ENCODE measurements at regions of chr19 and their contacts with region 1.

Region 1: DNA sequence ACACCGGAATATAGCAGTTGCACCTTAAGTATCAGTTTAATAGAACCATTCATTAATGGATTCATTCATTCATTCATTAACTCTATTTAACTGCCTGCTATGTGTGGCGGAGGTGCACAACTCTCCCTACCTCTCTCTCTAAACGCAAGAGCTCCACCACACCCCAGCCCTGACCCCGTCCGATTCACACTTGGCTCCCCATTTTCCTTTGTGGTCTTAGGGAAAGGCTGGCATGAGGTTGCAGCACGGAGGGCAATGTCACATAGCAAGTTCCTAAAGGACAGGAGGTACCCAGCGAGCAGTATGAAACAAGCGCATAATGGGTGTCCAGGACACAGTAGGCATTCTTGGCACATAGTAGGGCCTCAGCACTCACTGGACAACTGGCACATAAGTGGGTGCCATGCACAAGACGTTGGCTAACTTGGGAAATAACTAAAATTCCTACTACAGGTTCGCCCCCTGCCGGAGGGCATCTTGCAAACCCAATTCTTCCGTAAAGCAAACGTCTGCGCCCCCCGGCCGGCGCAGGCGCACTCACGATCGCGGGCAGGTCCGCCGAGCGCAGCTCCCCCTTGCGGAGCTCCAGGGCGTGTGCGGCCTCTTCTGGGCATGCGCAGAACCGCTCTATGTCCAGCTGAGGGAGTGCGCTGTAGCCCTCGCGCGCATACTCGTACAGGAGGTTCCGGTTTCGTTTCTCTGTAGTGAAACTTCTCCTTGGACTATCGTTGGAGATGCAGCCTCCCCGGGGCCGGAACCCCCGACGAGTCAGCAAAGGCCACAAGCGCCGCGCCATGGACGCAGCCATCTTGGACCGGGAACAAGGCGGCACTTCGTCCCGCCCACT is at the start of gene SARS2:
- DNase-seq: peak; percentile 92 to 99 (median 97)
- H3K4me3 ChIP-seq: peak within 1 kb of the TSS; percentile 85 to 87
- H3K4me3 Mint-ChIP-seq: peak within 1 kb of the TSS; percentile 94 to 99 (median 98)
- H3K27ac ChIP-seq: peak within 1 kb of the TSS; percentile 93
- H3K27ac Mint-ChIP-seq: peak within 1 kb of the TSS; percentile 98 to 100 (median 100)
- H3K4me1 ChIP-seq: peaks cover 40% of the 10 kb centered on the region
- H3K4me1 Mint-ChIP-seq: peaks cover 13 to 57% (median 32%) of the 10 kb centered on the region in 4 donors
- H3K27me3 ChIP-seq: no peaks in the 10 kb centered on the region
- H3K27me3 Mint-ChIP-seq: no peaks in the 10 kb centered on the region
- total RNA-seq, gene SARS2: 17.0 to 20.2 TPM

Region 2: GRCh38 chr19:37906869-37907734 is 1023.0 kb before region 1 on chr19 and contains the start of gene SIPA1L3:
- CTCF ChIA-PET with region 1: no interaction called
- POLR2A ChIA-PET with region 1: no interaction called
- intact Hi-C with region 1: loop called (anchors 5 kb)
- DNase-seq: peak; percentile 89 to 92 (median 90)
- H3K4me3 ChIP-seq: peak within 1 kb of the TSS; percentile 63 to 96
- H3K4me3 Mint-ChIP-seq: peak within 1 kb of the TSS; percentile 92 to 96 (median 93)
- H3K27ac ChIP-seq: peak within 1 kb of the TSS; percentile 71
- H3K27ac Mint-ChIP-seq: peak within 1 kb of the TSS; percentile 86 to 95 (median 91)
- H3K4me1 ChIP-seq: peaks cover 22% of the 10 kb centered on the region
- H3K4me1 Mint-ChIP-seq: peaks cover 16 to 36% (median 25%) of the 10 kb centered on the region in 4 donors
- H3K27me3 ChIP-seq: no peaks in the 10 kb centered on the region
- H3K27me3 Mint-ChIP-seq: no peaks in the 10 kb centered on the region
- total RNA-seq, gene SIPA1L3: 31.8 to 35.0 TPM

Region 3: DNA sequence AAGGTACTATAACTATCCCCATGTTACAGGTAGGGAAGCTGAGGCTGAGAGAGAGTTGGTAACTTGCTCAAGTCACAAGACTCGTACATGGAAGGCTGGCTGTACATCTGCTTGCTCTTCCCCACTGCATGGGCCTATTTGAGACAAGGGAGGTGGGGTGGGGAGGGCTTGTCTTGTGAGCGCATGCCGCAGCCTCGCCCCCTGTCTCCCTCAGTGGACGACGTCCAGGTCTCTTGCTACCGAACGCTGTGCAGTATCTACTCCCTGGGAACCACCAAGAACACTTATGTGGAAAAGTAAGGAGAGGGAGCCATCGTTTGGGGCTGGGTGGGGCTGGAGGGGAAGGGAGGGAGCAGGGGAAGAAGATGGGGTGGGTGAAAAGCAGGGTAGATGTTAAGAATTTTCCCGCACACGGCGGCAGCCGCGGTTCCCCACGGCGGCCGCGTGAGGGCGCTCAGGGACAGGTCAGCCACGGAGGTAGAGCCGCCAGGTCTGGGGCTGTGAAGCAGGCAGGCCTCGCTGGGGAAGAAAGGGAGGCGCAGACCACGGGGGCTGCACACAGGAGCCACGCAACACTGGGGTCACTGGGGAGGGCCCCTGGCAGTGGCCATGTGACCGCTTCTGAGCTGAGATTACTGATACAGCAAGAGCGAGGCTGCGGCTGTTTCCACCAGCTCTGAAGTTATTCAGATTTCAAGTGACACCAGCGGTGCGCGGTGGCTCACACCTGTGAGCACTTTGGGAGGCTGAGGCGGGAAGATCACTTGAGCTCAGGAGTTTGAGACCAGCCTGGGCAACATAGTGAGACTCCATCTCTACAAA is 415.1 kb before region 1 on chr19:
- CTCF ChIA-PET with region 1: interaction called, 11 read pairs
- POLR2A ChIA-PET with region 1: interaction called, 6 read pairs
- intact Hi-C with region 1: loop called (anchors 1 kb)
- DNase-seq: peak; percentile 74 to 79 (median 77)
- H3K4me3 ChIP-seq: no peak overlapping the region
- H3K4me3 Mint-ChIP-seq: peak overlapping the region in 3 of 8 donors; percentile 20 to 45 (median 22)
- H3K27ac ChIP-seq: no peak overlapping the region
- H3K27ac Mint-ChIP-seq: peak overlapping the region in 5 of 7 donors; percentile 35 to 57 (median 43)
- H3K4me1 ChIP-seq: peaks cover 19% of the 10 kb centered on the region
- H3K4me1 Mint-ChIP-seq: peaks cover 9 to 22% (median 16%) of the 10 kb centered on the region in 4 donors
- H3K27me3 ChIP-seq: no peaks in the 10 kb centered on the region
- H3K27me3 Mint-ChIP-seq: peaks cover 0 to 2% of the 10 kb centered on the region in 2 donors

Region 4: DNA sequence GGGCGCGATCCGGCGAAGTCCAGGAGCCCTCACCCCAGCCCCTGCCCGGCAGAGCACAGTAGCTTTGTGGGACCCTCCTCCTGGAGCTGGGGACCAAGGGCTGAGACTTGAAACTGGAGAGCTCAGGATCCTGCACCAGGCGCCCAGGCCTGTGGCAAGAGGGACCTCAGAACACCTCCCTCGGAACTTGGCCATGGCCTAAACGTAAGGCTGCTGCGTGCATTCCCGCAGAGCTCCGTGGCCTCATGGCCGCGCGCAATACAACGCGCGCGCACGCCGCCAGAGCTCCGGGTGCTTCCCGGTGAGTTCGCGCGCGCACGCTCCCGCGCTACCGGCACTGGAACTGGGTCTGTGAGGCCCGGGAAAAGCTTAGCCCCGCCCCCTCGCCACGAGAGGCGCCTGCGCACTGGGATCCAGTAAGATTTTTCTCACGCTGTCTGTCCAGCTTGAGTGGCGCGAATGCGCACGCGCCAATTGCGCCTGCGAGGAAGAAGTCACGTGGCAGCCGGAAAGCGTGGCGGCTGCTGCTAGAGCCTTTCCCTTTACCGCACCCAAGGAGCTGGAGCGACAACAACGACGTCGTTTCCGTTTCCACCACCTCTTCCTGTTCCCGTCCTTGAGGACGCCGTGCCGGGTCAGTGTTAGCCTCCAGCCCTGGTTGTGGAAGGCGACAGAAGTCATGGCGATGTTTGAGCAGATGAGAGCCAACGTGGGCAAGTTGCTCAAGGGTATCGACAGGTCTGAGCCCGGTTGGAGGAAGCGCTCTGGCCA is 311.4 kb before region 1 on chr19 and contains the start of gene EIF3K:
- CTCF ChIA-PET with region 1: interaction called, 14 read pairs
- POLR2A ChIA-PET with region 1: interaction called, 11 read pairs
- intact Hi-C with region 1: no loop called
- DNase-seq: peak; percentile 95 to 97 (median 96)
- H3K4me3 ChIP-seq: peak within 1 kb of the TSS; percentile 97 to 99
- H3K4me3 Mint-ChIP-seq: peak within 1 kb of the TSS; percentile 95 to 100 (median 100)
- H3K27ac ChIP-seq: peak within 1 kb of the TSS; percentile 90
- H3K27ac Mint-ChIP-seq: peak within 1 kb of the TSS; percentile 93 to 100 (median 99)
- H3K4me1 ChIP-seq: peaks cover 57% of the 10 kb centered on the region
- H3K4me1 Mint-ChIP-seq: peaks cover 28 to 60% (median 45%) of the 10 kb centered on the region in 4 donors
- H3K27me3 ChIP-seq: no peaks in the 10 kb centered on the region
- H3K27me3 Mint-ChIP-seq: no peaks in the 10 kb centered on the region
- total RNA-seq, gene EIF3K: 320 to 340 TPM

Region 5: GRCh38 chr19:38736036-38736412 is 194.1 kb before region 1 on chr19:
- CTCF ChIA-PET with region 1: interaction called, 18 read pairs
- POLR2A ChIA-PET with region 1: interaction called, 15 read pairs
- intact Hi-C with region 1: loop called (anchors 1 kb)
- DNase-seq: peak; percentile 57 to 80 (median 59)
- H3K4me3 ChIP-seq: peak overlapping the region in 1 of 2 donors; percentile 14
- H3K4me3 Mint-ChIP-seq: peak overlapping the region; percentile 27 to 77 (median 60)
- H3K27ac ChIP-seq: peak overlapping the region; percentile 30
- H3K27ac Mint-ChIP-seq: peak overlapping the region in 4 of 7 donors; percentile 30 to 88 (median 74)
- H3K4me1 ChIP-seq: peaks cover 57% of the 10 kb centered on the region
- H3K4me1 Mint-ChIP-seq: peaks cover 24 to 69% (median 42%) of the 10 kb centered on the region in 4 donors
- H3K27me3 ChIP-seq: no peaks in the 10 kb centered on the region
- H3K27me3 Mint-ChIP-seq: peaks cover 0 to 2% of the 10 kb centered on the region in 2 donors

Region 6: GRCh38 chr19:38849860-38850435 is 80.2 kb before region 1 on chr19 and contains the start of gene HNRNPL:
- CTCF ChIA-PET with region 1: interaction called, 8 read pairs
- POLR2A ChIA-PET with region 1: interaction called, 14 read pairs
- intact Hi-C with region 1: loop called (anchors 1 kb)
- DNase-seq: peak; percentile 99 to 100 (median 100)
- H3K4me3 ChIP-seq: peak within 1 kb of the TSS; percentile 94 to 98
- H3K4me3 Mint-ChIP-seq: peak within 1 kb of the TSS; percentile 94 to 97 (median 96)
- H3K27ac ChIP-seq: peak within 1 kb of the TSS; percentile 99
- H3K27ac Mint-ChIP-seq: peak within 1 kb of the TSS; percentile 83 to 100 (median 99)
- H3K4me1 ChIP-seq: peaks cover 58% of the 10 kb centered on the region
- H3K4me1 Mint-ChIP-seq: peaks cover 30 to 72% (median 50%) of the 10 kb centered on the region in 4 donors
- H3K27me3 ChIP-seq: no peaks in the 10 kb centered on the region
- H3K27me3 Mint-ChIP-seq: peaks cover 1% of the 10 kb centered on the region in 2 donors
- total RNA-seq, gene HNRNPL: 329 to 351 TPM

Region 7: DNA sequence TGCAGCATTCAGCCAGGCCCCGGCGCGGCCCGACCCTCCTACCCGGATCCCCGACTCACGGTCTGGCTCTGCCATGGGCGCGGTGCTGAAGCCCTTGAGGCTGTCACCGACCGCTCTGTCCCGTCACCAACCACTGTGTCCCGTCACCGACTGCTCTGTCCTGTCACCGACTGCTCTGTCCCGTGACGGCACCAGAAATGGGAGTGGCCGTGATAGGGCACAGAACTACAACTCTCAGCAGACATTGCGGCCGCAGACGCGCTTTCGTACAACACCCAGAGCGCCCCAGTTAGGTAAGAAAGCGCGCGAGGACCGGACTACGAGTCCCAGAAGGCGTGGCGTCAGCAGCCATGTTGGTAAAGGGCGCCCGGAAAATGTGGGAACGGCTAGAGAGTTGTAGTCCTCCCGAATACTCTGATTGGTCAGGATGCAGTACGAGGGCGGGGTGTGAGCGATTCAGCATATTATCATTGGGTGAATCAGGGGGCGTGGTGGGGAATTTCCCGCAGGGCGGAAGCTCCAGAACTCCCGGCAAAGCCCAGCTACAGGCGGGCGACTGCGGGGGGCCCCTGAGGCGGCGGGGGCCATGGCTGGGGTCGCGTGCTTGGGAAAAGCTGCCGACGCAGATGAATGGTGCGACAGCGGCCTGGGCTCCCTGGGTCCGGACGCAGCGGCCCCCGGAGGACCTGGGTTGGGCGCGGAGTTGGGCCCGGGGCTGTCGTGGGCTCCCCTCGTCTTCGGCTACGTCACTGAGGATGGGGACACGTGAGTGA is 30.5 kb before region 1 on chr19 and contains the starts of genes NFKBIB and SIRT2:
- CTCF ChIA-PET with region 1: interaction called, 35 read pairs
- POLR2A ChIA-PET with region 1: interaction called, 13 read pairs
- intact Hi-C with region 1: loop called (anchors 1 kb)
- DNase-seq: peak; percentile 98 to 100 (median 100)
- H3K4me3 ChIP-seq: peak within 1 kb of the TSS; percentile 71 to 87
- H3K4me3 Mint-ChIP-seq: peak within 1 kb of the TSS; percentile 92 to 98 (median 96)
- H3K27ac ChIP-seq: peak within 1 kb of the TSS; percentile 99
- H3K27ac Mint-ChIP-seq: peak within 1 kb of the TSS; percentile 90 to 100 (median 99)
- H3K4me1 ChIP-seq: peaks cover 34% of the 10 kb centered on the region
- H3K4me1 Mint-ChIP-seq: peaks cover 17 to 59% (median 39%) of the 10 kb centered on the region in 4 donors
- H3K27me3 ChIP-seq: no peaks in the 10 kb centered on the region
- H3K27me3 Mint-ChIP-seq: no peaks in the 10 kb centered on the region
- total RNA-seq, gene NFKBIB: 23.9 to 26.0 TPM
- total RNA-seq, gene SIRT2: 47.0 to 50.0 TPM

Region 8: DNA sequence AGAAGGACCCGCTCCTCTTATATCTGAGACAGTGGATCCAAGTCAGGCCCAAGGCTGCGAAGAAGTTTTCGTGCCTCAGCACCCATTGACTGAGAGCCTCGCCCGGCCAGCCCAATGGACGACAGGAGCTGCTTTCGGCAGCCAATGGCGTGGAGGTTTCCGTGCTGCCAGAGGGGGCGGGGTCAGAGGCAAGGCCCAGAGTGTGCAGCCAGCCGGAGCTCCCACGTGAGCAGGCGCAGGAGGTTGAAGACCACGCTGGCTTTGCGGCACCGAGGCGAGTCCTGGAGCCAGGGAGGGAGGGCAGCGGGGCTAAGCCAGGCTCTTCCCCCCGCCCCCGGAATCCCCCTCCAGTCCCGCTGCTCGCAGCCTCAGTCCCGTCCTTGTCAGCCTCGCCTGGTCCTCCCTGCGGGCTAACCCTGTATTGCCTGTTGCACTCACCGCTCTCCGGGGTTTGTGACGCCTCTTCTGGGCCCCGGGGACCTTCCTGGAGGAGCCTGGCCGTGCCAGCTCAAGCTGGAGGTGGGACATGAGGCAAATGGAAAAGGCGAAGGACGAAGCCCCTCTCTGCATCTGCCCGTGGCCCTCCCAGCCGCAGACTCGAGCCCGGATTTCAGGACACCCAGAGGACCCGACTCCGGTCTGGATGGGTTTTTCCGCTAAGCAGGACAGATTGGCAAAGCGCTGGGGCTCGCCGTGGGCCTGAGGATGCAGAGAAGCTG is 317.0 kb after region 1 on chr19:
- CTCF ChIA-PET with region 1: no interaction called
- POLR2A ChIA-PET with region 1: no interaction called
- intact Hi-C with region 1: no loop called
- DNase-seq: peak in 3 of 5 donors; percentile 22 to 56 (median 30)
- H3K4me3 ChIP-seq: no peak overlapping the region
- H3K4me3 Mint-ChIP-seq: peak overlapping the region; percentile 36 to 73 (median 56)
- H3K27ac ChIP-seq: no peak overlapping the region
- H3K27ac Mint-ChIP-seq: no peak overlapping the region
- H3K4me1 ChIP-seq: no peaks in the 10 kb centered on the region
- H3K4me1 Mint-ChIP-seq: peaks cover 0 to 4% (median 3%) of the 10 kb centered on the region in 4 donors
- H3K27me3 ChIP-seq: no peaks in the 10 kb centered on the region
- H3K27me3 Mint-ChIP-seq: peaks cover 1 to 4% of the 10 kb centered on the region in 2 donors